ENCODE measurements at regions of chr13 and their contacts with region 1.

Region 1: GRCh38 chr13:20713751-20714150 is 10.3 kb downstream of the IL17D start:
- DNase-seq: no peak
- H3K4me3 Mint-ChIP-seq: no peak overlapping the region
- H3K27ac Mint-ChIP-seq: no peak overlapping the region
- H3K4me1 Mint-ChIP-seq: peaks cover 19% of the 10 kb centered on the region
- H3K27me3 Mint-ChIP-seq: no peaks in the 10 kb centered on the region
- CTCF ChIP-seq: no peak

Region 2: GRCh38 chr13:20495082-20496023 is 218.4 kb before region 1 on chr13:
- CTCF ChIA-PET with region 1: interaction called, 4 read pairs
- POLR2A ChIA-PET with region 1: no interaction called
- intact Hi-C with region 1: loop called (anchors 2 kb)
- DNase-seq: peak; percentile 77
- H3K4me3 Mint-ChIP-seq: no peak overlapping the region
- H3K27ac Mint-ChIP-seq: no peak overlapping the region
- H3K4me1 Mint-ChIP-seq: peaks cover 13% of the 10 kb centered on the region
- H3K27me3 Mint-ChIP-seq: no peaks in the 10 kb centered on the region
- CTCF ChIP-seq: peak; percentile 91